Vagina (tissue), 2 donors: ENCODE measurements at regions of chr4 and their contacts with region 1.

Region 1: GRCh38 chr4:70158576-70158975 is 4.5 kb downstream of the PRR27 start:
- DNase-seq: no peak
- H3K4me3 ChIP-seq: no peak overlapping the region
- H3K27ac ChIP-seq: no peak overlapping the region
- H3K4me1 ChIP-seq: no peaks in the 10 kb centered on the region
- H3K27me3 ChIP-seq: no peaks in the 10 kb centered on the region
- CTCF ChIP-seq: no peak
- POLR2A ChIP-seq: no peak

Region 2: DNA sequence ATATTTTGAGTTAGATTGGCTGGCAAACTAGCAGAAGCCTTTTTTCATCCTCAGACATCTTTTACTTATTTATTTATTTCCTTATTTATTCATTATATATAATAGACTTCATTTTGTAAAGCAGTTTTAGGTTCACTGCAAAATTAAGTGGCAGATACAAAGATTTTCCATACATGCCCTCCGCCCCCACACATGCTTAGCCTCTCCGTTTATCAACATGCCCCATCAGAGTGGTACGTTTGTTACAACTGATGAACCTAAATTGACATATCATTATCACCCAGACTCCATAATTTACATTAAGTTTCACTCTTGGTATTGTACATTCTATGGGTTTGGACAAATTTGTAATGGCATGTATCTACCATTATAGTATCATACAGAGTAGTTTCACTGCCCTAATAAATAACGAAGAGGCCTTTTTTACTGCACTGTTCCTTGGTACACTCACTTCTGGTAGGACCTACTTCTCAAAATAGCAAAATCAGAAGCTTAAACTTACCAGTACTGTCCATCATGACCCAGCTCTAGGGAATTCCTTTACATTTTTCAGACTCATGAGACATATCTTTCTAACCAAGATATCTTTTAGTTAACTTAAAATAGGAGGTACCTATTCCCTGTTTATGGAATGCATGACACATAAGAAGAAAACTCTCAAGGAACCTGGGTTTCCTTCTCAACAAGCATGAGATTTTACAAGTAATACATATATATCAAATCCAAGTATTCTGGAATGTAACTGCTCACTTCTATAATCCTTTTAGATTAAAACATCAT is 1908.2 kb before region 1 on chr4:
- intact Hi-C with region 1: loop called (anchors 5 kb)
- DNase-seq: no peak
- H3K4me3 ChIP-seq: no peak overlapping the region
- H3K27ac ChIP-seq: no peak overlapping the region
- H3K4me1 ChIP-seq: no peaks in the 10 kb centered on the region
- H3K27me3 ChIP-seq: no peaks in the 10 kb centered on the region
- CTCF ChIP-seq: no peak
- POLR2A ChIP-seq: no peak

Region 3: DNA sequence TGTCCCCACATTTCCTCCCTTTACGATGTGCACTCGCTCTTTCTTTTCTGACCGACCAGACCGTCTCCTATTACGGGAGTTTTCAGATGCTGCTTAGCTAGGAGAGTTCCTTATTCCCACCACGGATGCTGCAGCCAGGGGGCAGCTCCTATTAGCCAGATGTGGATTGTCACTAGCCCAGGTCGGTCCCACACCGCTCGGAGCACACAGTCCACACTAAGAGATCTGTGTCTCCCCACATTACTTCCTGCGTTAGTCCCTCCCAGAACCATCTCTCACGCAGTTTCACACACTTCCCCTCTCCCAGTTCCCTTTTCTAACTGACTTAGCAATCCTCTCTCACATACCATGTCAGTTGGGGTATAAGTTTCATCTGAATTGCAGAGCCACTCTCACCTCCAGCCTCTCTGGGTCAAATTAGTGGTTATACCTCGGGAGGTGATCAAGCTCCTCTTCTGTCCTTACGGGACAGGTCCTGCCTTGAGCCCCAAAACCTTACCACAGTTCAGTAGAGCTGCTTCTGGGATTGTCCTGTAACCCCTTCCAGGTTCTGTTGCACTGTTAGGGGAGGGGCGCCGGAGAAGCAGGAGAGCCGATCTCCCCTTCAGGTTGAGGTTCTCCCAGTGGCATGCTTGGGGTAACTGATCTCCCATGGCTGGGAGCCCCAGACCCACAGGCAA is 326.8 kb before region 1 on chr4:
- intact Hi-C with region 1: no loop called
- DNase-seq: no peak
- H3K4me3 ChIP-seq: no peak overlapping the region
- H3K27ac ChIP-seq: peak overlapping the region; percentile 50
- H3K4me1 ChIP-seq: peaks cover 48% of the 10 kb centered on the region
- H3K27me3 ChIP-seq: no peaks in the 10 kb centered on the region
- CTCF ChIP-seq: no peak
- POLR2A ChIP-seq: no peak